Lower leg skin (tissue), 4 donors: ENCODE measurements at regions of chr10 and their contacts with region 1.

Region 1: GRCh38 chr10:9294865-9295264 is 1240.4 kb downstream of the GATA3 start:
- DNase-seq: no peak
- H3K4me3 ChIP-seq: no peak overlapping the region
- CTCF ChIP-seq: no peak
- POLR2A ChIP-seq: no peak

Region 2: DNA sequence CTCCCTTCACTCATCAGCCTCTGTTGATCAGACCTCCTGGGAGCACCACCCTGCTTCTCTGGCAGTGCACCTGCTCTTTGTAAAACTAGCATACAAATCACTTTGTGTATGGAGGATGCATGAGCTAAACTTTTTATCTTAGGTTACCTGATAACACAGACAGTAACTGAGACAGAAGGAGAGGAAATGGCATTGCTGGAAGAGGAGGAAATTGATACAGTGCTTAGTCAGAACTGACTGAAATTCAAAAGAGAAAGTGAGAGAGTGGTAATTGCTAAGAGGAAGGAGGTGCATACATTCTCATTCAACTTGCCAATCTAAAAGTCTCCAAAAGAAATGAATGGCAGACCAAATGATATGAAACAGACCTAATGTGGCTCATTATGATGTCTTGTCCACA is 119.7 kb before region 1 on chr10:
- intact Hi-C with region 1: no loop called
- DNase-seq: no peak
- H3K4me3 ChIP-seq: no peak overlapping the region
- CTCF ChIP-seq: no peak
- POLR2A ChIP-seq: no peak

Region 3: GRCh38 chr10:9274206-9274755 is 20.6 kb before region 1 on chr10:
- intact Hi-C with region 1: loop called (anchors 2 kb)
- DNase-seq: no peak
- H3K4me3 ChIP-seq: no peak overlapping the region
- CTCF ChIP-seq: no peak
- POLR2A ChIP-seq: no peak